ENCODE measurements at regions of chr2 and their contacts with region 1.

Region 1: DNA sequence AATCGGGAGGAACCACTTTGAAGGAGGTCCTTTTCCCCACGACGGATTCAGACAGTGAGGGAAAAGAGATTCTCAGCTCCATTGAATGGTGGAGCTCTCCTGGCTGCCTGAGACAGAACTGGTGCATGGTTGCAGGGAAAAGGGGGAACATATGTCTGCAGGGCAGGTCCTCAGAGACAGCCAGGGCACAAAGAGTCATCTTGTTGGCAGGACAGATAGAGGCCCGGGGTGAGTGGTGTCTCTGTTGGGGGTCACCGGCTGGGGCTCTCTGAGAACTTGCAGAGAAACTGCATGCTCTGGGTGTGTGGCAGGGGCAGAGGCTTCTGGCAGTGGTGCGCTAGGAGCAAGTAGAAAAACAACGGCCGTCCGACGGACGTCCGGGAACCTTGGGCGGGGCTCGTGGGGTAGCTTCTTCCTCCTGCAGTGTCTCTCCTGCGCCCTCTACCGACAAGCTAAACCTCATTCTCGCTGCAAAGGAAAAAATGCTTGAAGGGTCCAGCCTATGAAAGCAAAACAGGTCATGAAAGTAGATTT is 94.3 kb downstream of the CDCA7 start:
- DNase-seq: peak; percentile 83 to 90 (median 88)
- ATAC-seq: peak; percentile 68 to 96 (median 94)
- H3K4me3 ChIP-seq: peak overlapping the region in 10 of 12 donors; percentile 22 to 53 (median 40)
- H3K27ac ChIP-seq: peak overlapping the region in 11 of 12 donors; percentile 33 to 80 (median 62)
- H3K4me1 ChIP-seq: peaks cover 0 to 9% (median 0%) of the 10 kb centered on the region in 12 donors
- H3K27me3 ChIP-seq: no peaks in the 10 kb centered on the region
- CTCF ChIP-seq: peak; percentile 66 to 88 (median 74)
- POLR2A ChIP-seq: no peak

Region 2: GRCh38 chr2:172977270-172978062 is 471.5 kb before region 1 on chr2:
- intact Hi-C with region 1: loop called in 1 of 10 experiments (anchors 5 kb)
- DNase-seq: no peak
- ATAC-seq: peak; percentile 51 to 73 (median 62)
- H3K4me3 ChIP-seq: no peak overlapping the region
- H3K27ac ChIP-seq: no peak overlapping the region
- H3K4me1 ChIP-seq: peaks cover 0 to 11% (median 5%) of the 10 kb centered on the region in 12 donors
- H3K27me3 ChIP-seq: no peaks in the 10 kb centered on the region
- CTCF ChIP-seq: peak in 8 of 12 donors; percentile 18 to 53 (median 30)
- POLR2A ChIP-seq: no peak

Region 3: DNA sequence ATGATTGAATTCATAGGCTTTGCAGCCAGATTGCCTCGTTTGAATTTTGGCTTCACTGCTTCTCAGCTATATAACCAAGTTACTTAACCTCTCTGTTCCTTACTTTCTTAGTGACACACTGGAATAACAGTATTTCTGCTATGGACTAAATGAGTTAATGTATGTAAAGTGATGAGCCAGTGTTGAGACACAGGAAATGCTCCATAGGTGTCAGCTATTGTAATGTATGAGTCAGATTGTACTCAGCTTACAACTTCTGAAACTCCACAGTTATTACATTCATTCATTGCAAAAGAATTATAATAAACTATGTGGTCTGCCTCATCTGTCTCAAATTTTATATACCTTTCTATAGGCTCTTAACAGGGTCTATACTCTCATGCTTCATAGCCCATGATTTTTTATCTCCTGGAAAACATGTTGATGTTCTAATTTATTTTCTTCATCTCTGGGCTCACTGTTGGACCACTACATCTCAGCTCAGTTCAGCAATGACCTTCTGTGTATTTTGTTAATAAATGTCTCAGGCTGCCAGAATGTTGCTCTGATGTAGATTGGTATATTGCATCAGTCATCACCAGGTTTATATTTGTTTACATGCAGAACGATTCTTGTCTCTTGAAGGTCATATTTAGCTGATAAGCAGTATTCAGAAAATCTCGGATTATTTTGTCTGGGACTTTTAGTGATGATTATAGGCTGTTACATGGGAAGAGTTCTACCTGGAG is 297.2 kb before region 1 on chr2:
- intact Hi-C with region 1: no loop called
- DNase-seq: no peak
- ATAC-seq: no peak
- H3K4me3 ChIP-seq: no peak overlapping the region
- H3K27ac ChIP-seq: peak overlapping the region in 2 of 12 donors; percentile 21 to 71
- H3K4me1 ChIP-seq: peaks cover 0 to 62% (median 38%) of the 10 kb centered on the region in 12 donors
- H3K27me3 ChIP-seq: no peaks in the 10 kb centered on the region
- CTCF ChIP-seq: no peak
- POLR2A ChIP-seq: no peak